GM13977 (cell line): ENCODE measurements at regions of chr14 and their contacts with region 1.

Region 1: GRCh38 chr14:103910262-103910935 is 17.9 kb upstream of the TDRD9 start:
- DNase-seq: peak; percentile 77
- CTCF ChIP-seq: peak; percentile 77

Region 2: DNA sequence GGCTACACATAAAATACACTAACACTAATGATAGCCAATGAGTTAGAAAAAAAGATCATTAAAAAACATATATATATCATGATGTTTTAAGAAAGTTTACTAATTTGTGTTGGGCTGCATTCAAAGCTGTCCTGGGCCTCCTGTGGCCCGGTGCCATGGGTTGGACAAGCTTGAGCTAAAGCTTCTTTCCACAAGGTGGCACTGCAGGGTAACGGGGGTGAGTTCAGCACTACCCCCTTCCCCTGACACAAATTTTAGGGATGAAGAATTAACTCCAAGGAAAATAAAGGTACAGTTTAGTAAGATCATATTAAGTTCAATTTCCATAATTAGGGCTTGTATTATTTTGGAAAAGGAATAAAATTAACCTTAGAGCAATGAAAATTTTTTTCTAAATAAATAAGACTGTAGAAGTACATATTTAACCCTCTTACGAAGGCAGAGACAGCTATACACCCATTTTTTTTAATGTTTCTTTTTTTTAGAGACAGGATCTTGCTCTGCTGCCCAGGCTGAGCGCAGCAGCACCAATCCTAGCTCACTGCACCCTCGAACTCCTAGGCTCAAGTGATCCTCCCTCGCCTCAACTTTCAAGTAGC is 101.9 kb before region 1 on chr14:
- in situ Hi-C with region 1: loop called (anchors 10 kb)
- DNase-seq: peak; percentile 49
- CTCF ChIP-seq: peak; percentile 86